Activated CD8-positive, alpha-beta T cell treated with anti-CD3 and anti-CD28 coated beads, Interleukin-2, amount 10 ng/mL, durations not matched to agents 7 days and 5 days (primary cell): ENCODE measurements at regions of chr12 and their contacts with region 1.

Region 1: GRCh38 chr12:52069327-52070184 is at the start of gene ATG101:
- DNase-seq: peak; percentile 92
- ATAC-seq: peak; percentile 97
- H3K4me3 Mint-ChIP-seq: peak within 1 kb of the TSS; percentile 93
- H3K27ac Mint-ChIP-seq: peak within 1 kb of the TSS; percentile 99
- H3K4me1 Mint-ChIP-seq: peaks cover 54% of the 10 kb centered on the region
- H3K27me3 Mint-ChIP-seq: peaks cover 6% of the 10 kb centered on the region
- total RNA-seq, gene ATG101: 28.8 to 31.1 TPM

Region 2: GRCh38 chr12:52041695-52042123 is 27.8 kb before region 1 on chr12:
- CTCF ChIA-PET with region 1: interaction called, 12 read pairs
- POLR2A ChIA-PET with region 1: interaction called, 3 read pairs
- DNase-seq: peak; percentile 72
- ATAC-seq: peak; percentile 45
- H3K4me3 Mint-ChIP-seq: peak overlapping the region; percentile 8
- H3K27ac Mint-ChIP-seq: peak overlapping the region; percentile 60
- H3K4me1 Mint-ChIP-seq: peaks cover 53% of the 10 kb centered on the region
- H3K27me3 Mint-ChIP-seq: peaks cover 3% of the 10 kb centered on the region

Region 3: DNA sequence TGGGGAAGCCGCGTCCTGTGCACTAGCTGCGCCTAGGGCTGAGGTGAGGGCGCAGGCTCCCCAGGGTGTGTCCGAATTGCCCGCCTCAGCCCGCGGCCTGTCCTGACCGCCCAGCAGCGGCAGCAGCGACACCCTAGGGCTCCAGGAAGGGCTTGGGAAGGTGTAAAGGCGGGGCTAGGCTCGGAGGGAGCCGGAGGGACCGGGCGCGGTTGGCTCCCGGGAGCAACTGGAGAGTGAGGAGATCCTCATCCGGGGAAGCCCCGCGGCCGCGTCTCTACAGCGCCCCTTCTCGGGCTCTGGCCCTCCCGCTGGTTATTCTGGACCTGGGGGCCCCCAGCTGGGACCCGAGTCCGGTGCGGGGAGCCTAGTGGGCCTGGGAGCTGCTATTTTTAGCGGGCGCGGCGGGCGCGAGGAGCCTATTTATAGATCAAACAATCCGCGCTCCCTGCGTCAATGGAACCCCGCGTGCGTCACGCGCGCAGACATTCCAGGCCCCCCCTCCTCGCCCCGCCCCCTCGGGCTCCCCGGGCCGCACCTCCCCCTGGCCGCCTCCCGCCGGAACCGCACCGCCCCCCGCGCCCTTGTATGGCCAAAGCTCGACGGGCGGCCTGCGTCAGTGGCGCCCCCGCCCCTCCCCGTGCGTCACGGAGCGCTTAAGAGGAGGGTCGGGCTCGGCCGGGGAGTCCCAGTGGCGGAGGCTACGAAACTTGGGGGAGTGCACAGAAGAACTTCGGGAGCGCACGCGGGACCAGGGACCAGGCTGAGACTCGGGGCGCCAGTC is 18.6 kb before region 1 on chr12 and contains the start of gene NR4A1:
- CTCF ChIA-PET with region 1: interaction called, 20 read pairs
- POLR2A ChIA-PET with region 1: interaction called, 18 read pairs
- DNase-seq: peak; percentile 98
- ATAC-seq: peak; percentile 85
- H3K4me3 Mint-ChIP-seq: peak within 1 kb of the TSS; percentile 86
- H3K27ac Mint-ChIP-seq: peak within 1 kb of the TSS; percentile 98
- H3K4me1 Mint-ChIP-seq: peaks cover 49% of the 10 kb centered on the region
- H3K27me3 Mint-ChIP-seq: no peaks in the 10 kb centered on the region
- total RNA-seq, gene NR4A1: 4.3 to 5.6 TPM

Region 4: DNA sequence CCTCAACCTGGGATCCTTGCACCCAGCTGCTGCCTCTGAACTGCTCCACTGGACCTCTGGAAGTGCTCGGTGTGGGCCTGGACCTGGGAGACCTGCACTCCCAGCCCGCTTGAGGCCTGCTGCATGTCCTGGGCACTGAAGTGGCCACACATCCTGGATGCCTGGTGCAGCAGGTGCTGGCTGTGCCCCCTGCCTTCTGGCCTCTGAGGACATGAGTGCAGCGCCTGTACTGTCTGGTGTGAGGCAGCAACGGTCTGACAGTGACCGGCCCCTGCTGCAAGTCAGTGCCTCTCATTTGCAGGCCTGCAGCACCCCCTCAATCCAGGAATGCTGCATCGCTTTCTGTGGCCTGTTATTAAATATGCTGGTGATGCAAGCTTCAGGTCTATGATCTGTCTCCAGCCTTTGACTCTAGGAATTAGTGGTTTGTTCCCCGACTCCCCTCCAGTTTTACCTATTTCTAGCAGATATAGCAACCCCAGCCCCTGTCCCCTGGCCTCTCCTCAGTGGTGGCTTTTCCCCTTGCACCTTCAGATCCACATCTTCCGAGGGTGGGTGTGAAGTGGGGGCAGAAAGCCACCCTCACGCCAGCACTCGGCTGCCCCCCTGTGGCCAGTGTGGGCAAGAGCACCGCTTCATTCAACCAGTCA is 13.6 kb after region 1 on chr12:
- CTCF ChIA-PET with region 1: interaction called, 31 read pairs
- POLR2A ChIA-PET with region 1: interaction called, 4 read pairs
- DNase-seq: peak; percentile 78
- ATAC-seq: peak; percentile 83
- H3K4me3 Mint-ChIP-seq: no peak overlapping the region
- H3K27ac Mint-ChIP-seq: no peak overlapping the region
- H3K4me1 Mint-ChIP-seq: peaks cover 18% of the 10 kb centered on the region
- H3K27me3 Mint-ChIP-seq: peaks cover 8% of the 10 kb centered on the region